ENCODE measurements at regions of chr6 and their contacts with region 1.

Region 1: GRCh38 chr6:30828027-30828960 is 56.0 kb upstream of the DDR1 start:
- DNase-seq: peak; percentile 68 to 94
- H3K4me3 ChIP-seq: peak overlapping the region; percentile 13 to 20
- H3K27ac ChIP-seq: peak overlapping the region; percentile 64 to 68
- H3K4me1 ChIP-seq: peaks cover 5 to 14% of the 10 kb centered on the region in 2 donors
- H3K27me3 ChIP-seq: no peaks in the 10 kb centered on the region
- CTCF ChIP-seq: peak; percentile 90 to 92 (median 91)

Region 2: GRCh38 chr6:30752157-30752927 is 76.0 kb before region 1 on chr6:
- intact Hi-C with region 1: no loop called
- DNase-seq: peak; percentile 95 to 99
- H3K4me3 ChIP-seq: peak overlapping the region in 1 of 2 donors; percentile 2
- H3K27ac ChIP-seq: peak overlapping the region; percentile 91 to 92
- H3K4me1 ChIP-seq: peaks cover 18 to 28% of the 10 kb centered on the region in 2 donors
- H3K27me3 ChIP-seq: no peaks in the 10 kb centered on the region
- CTCF ChIP-seq: no peak

Region 3: GRCh38 chr6:30781743-30782424 is 46.4 kb before region 1 on chr6:
- intact Hi-C with region 1: loop called (anchors 5 kb)
- DNase-seq: peak; percentile 83 to 98
- H3K4me3 ChIP-seq: peak overlapping the region in 1 of 2 donors; percentile 2
- H3K27ac ChIP-seq: peak overlapping the region; percentile 90 to 94
- H3K4me1 ChIP-seq: peaks cover 13 to 45% of the 10 kb centered on the region in 2 donors
- H3K27me3 ChIP-seq: no peaks in the 10 kb centered on the region
- CTCF ChIP-seq: no peak

Region 4: DNA sequence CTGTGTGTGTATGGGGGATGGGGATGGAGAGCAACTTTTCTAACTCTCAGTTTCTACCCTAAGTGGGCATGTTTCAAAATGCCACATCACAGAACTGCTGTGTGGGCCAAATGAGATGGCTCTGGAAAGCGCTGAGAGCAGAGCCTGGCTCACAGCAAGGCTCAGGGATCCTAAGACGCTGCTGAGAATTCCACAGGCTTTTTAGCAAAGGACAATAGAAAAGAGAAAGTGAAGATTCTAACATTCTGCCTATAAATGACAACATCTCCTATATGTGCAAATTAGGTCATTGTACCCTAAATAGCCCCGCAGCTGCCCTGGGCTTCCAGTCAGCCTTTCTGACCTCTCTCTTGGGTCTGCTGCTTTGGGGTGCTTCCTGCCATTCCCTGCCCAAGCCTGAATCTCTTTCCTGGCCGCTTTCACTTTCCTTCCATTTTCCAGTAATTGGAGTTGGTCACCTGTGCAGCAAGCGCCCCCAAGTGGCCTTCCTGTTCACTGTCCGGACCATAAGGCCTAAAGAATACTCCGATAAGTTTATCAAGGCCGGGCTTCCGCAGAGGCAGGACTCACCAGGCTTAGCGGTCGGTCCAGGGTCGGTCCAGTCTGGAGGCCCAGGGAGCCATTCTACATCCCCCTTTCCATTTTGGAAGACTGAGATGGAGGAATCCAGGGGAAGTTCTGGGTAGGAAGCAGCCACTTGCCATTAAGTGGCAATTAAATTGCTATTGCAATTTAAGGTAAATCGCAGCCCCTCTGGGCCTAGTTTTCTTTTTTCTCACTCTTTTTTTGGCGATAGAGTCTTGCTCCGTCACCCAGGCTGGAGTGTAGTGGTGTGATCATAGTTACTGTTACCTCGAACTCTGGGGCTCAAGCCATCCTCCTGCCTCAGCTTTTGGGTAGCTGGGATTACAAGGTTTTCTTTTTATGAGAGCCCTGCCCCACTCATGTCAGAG is 49.4 kb after region 1 on chr6:
- intact Hi-C with region 1: loop called (anchors 1 kb)
- DNase-seq: peak; percentile 67 to 97
- H3K4me3 ChIP-seq: peak overlapping the region; percentile 45 to 57
- H3K27ac ChIP-seq: peak overlapping the region; percentile 81 to 87
- H3K4me1 ChIP-seq: peaks cover 0 to 11% of the 10 kb centered on the region in 2 donors
- H3K27me3 ChIP-seq: no peaks in the 10 kb centered on the region
- CTCF ChIP-seq: peak; percentile 86 to 90 (median 89)

Region 5: GRCh38 chr6:31087494-31088089 is 259.3 kb after region 1 on chr6:
- intact Hi-C with region 1: loop called (anchors 2 kb)
- DNase-seq: peak; percentile 16 to 90
- H3K4me3 ChIP-seq: no peak overlapping the region
- H3K27ac ChIP-seq: no peak overlapping the region
- H3K4me1 ChIP-seq: peaks cover 0 to 5% of the 10 kb centered on the region in 2 donors
- H3K27me3 ChIP-seq: no peaks in the 10 kb centered on the region
- CTCF ChIP-seq: peak; percentile 71 to 79 (median 72)

Region 6: DNA sequence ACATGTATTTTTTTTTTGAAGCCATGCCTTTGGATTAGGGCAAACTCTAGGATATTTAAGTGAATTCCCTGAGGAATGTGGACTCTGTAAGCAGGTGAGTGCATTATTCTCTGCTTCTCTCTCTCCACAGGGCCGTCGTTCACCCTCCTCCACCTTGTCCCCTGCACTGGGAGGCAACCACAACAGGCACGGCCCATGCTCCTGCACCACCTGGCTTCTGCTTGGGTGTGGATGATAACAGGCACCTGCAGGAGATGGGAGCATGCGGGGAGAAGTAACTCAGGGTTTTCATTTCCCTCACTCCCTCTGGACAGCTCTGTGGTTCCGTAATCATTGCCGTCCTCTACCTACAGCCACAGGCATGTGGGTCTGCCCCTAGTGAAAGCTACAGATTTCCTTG is 400.2 kb after region 1 on chr6:
- intact Hi-C with region 1: no loop called
- DNase-seq: no peak
- H3K4me3 ChIP-seq: no peak overlapping the region
- H3K27ac ChIP-seq: no peak overlapping the region
- H3K4me1 ChIP-seq: no peaks in the 10 kb centered on the region
- H3K27me3 ChIP-seq: no peaks in the 10 kb centered on the region
- CTCF ChIP-seq: no peak

Measured in ascending aorta (tissue), 2 donors.